Activated CD8-positive, alpha-beta T cell treated with anti-CD3 and anti-CD28 coated beads for 36 hours (primary cell): ENCODE measurements at regions of chr1 and their contacts with region 1.

Region 1: GRCh38 chr1:11719313-11720032 is 16.5 kb upstream of the AGTRAP start:
- DNase-seq: peak; percentile 93
- ATAC-seq: peak; percentile 87
- H3K4me3 Mint-ChIP-seq: peak overlapping the region; percentile 73
- H3K27ac Mint-ChIP-seq: peak overlapping the region; percentile 91
- H3K4me1 Mint-ChIP-seq: peaks cover 11% of the 10 kb centered on the region
- H3K27me3 Mint-ChIP-seq: no peaks in the 10 kb centered on the region
- CTCF ChIP-seq: peak; percentile 99

Region 2: DNA sequence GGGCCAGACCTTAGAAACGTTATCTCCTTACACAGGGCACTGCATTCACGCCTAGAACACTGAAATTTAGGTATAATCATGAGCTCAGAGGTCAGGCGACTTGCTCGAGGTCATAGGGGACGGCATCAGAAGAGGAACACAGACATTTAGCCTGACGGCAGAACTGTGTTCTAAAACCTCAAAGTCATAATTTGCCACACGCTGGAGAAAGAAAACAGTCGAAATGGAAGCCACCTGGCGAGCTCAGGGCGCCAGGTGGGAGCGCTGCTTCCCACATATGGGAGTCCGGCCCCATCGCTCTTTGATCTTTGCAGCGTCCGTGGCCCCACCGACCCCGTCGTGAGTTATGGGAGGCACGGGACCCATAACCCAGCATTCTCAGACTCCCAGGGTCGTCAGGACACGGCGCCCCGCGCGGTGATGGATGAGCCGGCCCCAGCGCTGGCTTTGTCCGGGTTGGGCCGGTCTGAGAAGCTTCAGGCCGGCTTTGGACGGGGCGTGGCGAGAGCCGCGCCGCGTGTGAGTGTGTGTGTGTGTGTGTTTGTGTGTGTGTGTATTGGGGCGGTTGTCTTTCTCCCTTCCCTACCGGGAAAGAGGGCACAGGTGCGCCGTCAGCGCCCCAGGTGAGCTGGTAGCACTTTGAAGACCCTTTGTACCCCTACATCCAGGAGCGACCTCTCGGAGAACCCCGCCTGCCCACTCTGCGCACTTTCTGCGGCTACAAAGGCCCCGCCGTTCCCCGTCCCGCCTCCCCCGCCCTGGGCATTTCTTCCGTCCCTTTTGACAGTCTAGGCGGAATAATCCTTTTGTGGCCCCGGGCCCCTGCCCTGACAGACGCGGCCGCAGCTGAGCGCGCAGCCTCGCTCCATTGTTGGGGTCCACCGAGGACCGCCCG is 28.8 kb before region 1 on chr1:
- CTCF ChIA-PET with region 1: interaction called, 13 read pairs
- POLR2A ChIA-PET with region 1: interaction called, 3 read pairs
- intact Hi-C with region 1: no loop called
- DNase-seq: no peak
- ATAC-seq: no peak
- H3K4me3 Mint-ChIP-seq: peak overlapping the region; percentile 42
- H3K27ac Mint-ChIP-seq: no peak overlapping the region
- H3K4me1 Mint-ChIP-seq: peaks cover 22% of the 10 kb centered on the region
- H3K27me3 Mint-ChIP-seq: peaks cover 36% of the 10 kb centered on the region
- CTCF ChIP-seq: no peak

Region 3: DNA sequence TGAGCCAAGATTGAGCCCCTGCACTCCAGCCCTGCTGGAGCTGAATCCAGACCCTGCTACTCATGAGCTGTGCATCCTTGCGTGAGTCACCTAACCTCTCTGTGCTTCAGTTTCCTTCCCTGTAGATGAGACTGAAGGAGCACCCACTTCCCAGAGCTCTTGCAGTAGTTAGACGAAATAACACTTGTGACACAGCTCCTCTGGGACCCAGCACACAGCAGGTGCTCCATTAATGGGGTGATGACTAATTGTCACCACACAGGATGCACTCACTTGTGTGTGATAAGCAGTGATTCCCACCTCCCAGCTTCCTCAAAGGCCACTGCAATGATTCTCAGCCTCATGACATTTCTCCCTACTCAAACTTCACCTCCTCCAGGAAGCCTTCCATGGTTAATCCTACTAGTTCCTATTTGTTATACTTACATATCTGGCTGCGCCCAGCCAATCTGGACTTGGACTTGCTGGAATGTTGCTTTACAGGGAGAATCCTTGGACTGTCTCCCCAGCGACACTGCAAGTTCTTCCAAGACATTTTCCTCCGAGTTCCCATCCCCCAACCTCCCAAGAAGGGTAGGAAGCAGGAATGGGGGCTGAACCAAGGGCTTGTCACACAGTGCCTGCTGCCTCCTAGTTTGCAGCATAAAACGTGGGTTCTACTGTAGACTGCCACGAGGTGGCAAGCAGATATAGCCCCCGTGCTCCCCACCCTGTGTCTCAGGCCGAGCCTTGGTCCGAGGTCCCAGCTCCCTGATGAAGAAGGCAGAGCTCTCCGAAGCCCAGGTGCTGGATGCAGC is 10.7 kb before region 1 on chr1:
- CTCF ChIA-PET with region 1: interaction called, 11 read pairs
- POLR2A ChIA-PET with region 1: interaction called, 4 read pairs
- intact Hi-C with region 1: no loop called
- DNase-seq: peak; percentile 24
- ATAC-seq: peak; percentile 57
- H3K4me3 Mint-ChIP-seq: no peak overlapping the region
- H3K27ac Mint-ChIP-seq: no peak overlapping the region
- H3K4me1 Mint-ChIP-seq: no peaks in the 10 kb centered on the region
- H3K27me3 Mint-ChIP-seq: no peaks in the 10 kb centered on the region
- CTCF ChIP-seq: no peak

Region 4: DNA sequence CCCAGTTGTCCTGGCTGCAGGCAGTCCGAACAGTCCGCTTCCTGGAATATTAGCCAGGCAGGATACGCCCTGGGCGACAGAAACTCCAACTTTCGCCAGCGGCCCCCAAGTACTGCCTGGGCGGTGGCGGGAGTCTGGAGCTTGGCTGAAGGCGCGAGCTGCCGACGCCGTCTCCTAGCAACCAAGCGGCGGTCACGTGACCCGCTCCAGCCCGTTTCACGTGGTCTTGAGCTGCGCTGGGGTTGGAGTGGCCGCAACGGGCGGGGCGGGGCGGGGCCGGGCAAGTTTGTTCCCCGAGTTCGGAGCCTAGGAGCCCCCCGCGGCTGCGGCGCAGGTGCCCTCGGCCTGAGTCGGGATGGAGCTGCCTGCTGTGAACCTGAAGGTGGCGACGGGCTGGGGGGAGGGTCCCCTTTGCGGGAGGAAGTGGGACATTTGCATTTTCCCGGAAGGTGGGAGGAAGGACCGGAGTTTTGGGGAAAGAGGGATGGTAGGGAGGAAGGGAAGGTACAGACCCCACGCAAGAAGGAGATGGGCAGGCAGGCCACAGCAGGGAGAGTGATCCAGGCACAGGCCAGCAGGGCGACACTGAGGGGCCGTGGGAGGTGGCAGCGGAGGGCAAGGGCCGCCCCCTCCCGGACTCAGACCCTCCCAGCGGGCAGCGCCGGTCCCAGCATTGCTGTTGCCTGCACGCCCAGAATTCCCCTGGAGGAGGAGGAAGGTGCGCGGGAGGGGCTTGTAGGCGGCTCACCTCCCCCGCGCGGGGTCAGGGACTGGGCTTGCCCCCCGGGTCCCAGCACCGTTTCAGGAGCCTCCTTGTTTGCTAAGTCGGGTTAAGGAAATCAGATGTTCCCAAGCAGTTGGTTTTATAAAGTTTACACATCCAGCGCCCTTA is 16.6 kb after region 1 on chr1 and contains the start of gene AGTRAP:
- CTCF ChIA-PET with region 1: interaction called, 17 read pairs
- POLR2A ChIA-PET with region 1: interaction called, 8 read pairs
- intact Hi-C with region 1: no loop called
- DNase-seq: peak; percentile 94
- ATAC-seq: peak; percentile 79
- H3K4me3 Mint-ChIP-seq: peak within 1 kb of the TSS; percentile 95
- H3K27ac Mint-ChIP-seq: peak within 1 kb of the TSS; percentile 91
- H3K4me1 Mint-ChIP-seq: peaks cover 50% of the 10 kb centered on the region
- H3K27me3 Mint-ChIP-seq: no peaks in the 10 kb centered on the region
- CTCF ChIP-seq: peak; percentile 25
- total RNA-seq, gene AGTRAP: 8.9 to 9.4 TPM

Region 5: DNA sequence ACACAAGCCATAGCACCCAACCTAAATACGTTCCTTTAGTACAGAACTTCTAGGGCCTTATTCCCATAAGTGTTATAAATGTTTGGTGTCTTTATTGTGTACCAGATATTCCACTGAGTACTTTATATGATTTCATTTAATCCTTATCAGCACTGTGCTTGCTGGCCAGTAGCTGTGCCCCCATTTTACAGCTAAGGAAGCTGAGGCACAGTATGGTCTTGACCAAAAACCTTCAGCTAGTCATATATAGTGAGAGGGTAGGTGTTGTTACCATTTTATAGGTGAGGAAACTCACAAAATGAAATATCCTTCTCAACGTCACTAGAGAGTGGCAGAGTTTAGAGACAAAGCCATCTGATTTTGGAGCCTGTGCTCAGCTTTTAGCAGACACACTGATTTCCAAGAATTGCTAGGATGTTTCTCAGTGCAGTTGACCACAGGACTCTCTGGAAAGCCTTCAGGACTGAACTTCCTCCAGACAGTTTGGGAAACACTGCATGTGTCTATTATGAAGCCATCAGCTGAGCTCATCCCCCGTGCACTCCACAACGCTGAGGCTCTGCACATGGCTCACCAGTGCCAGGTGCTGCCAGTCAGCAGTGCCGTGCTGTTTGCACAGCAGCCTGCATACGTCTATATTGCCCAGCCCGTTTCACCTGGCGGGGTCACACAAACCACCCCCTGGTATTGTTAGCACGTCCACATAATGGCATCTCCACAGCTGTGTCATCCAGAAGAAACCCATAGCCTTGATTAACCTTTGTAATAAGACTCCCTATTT is 112.7 kb after region 1 on chr1:
- CTCF ChIA-PET with region 1: no interaction called
- POLR2A ChIA-PET with region 1: no interaction called
- intact Hi-C with region 1: no loop called
- DNase-seq: no peak
- ATAC-seq: no peak
- H3K4me3 Mint-ChIP-seq: no peak overlapping the region
- H3K27ac Mint-ChIP-seq: no peak overlapping the region
- H3K4me1 Mint-ChIP-seq: no peaks in the 10 kb centered on the region
- H3K27me3 Mint-ChIP-seq: no peaks in the 10 kb centered on the region
- CTCF ChIP-seq: no peak

Region 6: GRCh38 chr1:11982010-11982392 is 262.5 kb after region 1 on chr1:
- CTCF ChIA-PET with region 1: no interaction called
- POLR2A ChIA-PET with region 1: no interaction called
- intact Hi-C with region 1: no loop called
- DNase-seq: peak; percentile 20
- ATAC-seq: no peak
- H3K4me3 Mint-ChIP-seq: peak overlapping the region; percentile 92
- H3K27ac Mint-ChIP-seq: peak overlapping the region; percentile 89
- H3K4me1 Mint-ChIP-seq: peaks cover 28% of the 10 kb centered on the region
- H3K27me3 Mint-ChIP-seq: no peaks in the 10 kb centered on the region
- CTCF ChIP-seq: peak; percentile 36